Motor neuron (in vitro differentiated cells): ENCODE measurements at regions of chr1 and their contacts with region 1.

Region 1: DNA sequence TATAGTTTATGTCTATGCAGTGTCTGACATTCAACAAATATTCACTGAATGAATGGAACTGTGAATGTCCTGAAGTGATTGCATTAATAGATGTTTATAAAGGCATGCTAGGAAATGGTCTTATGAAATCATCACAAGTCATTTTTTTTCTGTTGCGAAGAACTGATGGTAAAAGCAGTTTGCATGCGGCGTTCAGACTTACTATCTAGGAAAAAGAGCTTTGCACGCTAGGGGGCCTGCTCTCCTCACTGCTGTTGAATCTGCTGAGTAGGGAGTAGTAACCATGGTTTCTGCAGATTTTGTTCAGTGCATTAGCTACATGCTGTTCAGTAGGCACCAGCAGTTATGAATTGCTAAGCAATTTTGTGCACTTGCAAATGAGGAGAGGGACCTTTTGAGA is 57.9 kb downstream of the CENPF start:
- ATAC-seq: peak; percentile 96 to 99 (median 98)
- H3K4me3 ChIP-seq: no peak overlapping the region
- H3K27ac ChIP-seq: no peak overlapping the region
- H3K4me1 ChIP-seq: peaks cover 22 to 26% of the 10 kb centered on the region in 2 donors

Region 2: DNA sequence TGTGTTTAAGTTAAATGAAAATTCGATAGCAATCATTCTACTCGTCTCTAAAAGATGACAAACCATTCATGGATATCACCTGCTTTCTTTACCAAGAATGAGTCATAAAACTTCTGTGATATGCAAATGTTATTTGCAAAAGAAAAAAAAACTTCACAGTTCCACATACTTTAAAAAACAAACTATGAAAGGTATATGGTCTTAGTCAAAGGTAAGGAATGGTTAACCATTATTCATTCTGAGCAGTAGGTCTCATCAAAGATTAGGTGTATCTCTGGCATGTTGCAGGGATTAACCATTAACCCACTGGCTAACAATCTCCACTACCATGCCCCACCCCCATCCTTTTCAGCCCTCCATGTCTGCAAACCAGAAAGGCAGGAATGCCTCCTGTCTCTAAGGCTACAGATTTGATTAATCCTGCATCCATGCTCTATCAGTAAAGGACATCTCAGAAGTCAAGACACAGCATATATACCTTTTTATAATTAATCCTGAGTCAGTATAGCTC is 153.8 kb before region 1 on chr1:
- in situ Hi-C with region 1: no loop called
- ATAC-seq: no peak
- H3K4me3 ChIP-seq: no peak overlapping the region
- H3K27ac ChIP-seq: no peak overlapping the region
- H3K4me1 ChIP-seq: peaks cover 0 to 8% of the 10 kb centered on the region in 2 donors

Region 3: GRCh38 chr1:214808845-214809460 is 148.1 kb after region 1 on chr1:
- in situ Hi-C with region 1: loop called in 1 of 9 experiments (anchors 25 kb)
- ATAC-seq: peak in 3 of 8 experiments; percentile 55 to 74 (median 57)
- H3K4me3 ChIP-seq: no peak overlapping the region
- H3K27ac ChIP-seq: no peak overlapping the region
- H3K4me1 ChIP-seq: no peaks in the 10 kb centered on the region

Region 4: GRCh38 chr1:215146341-215146826 is 485.5 kb after region 1 on chr1:
- in situ Hi-C with region 1: loop called in 4 of 9 experiments (anchors 10 to 25 kb)
- ATAC-seq: no peak
- H3K4me3 ChIP-seq: no peak overlapping the region
- H3K27ac ChIP-seq: no peak overlapping the region
- H3K4me1 ChIP-seq: no peaks in the 10 kb centered on the region

Region 5: GRCh38 chr1:215517441-215517891 is 856.6 kb after region 1 on chr1:
- in situ Hi-C with region 1: loop called in 6 of 9 experiments (anchors 10 to 25 kb)
- ATAC-seq: peak in 7 of 8 experiments; percentile 52 to 96 (median 77)
- H3K4me3 ChIP-seq: no peak overlapping the region
- H3K27ac ChIP-seq: no peak overlapping the region
- H3K4me1 ChIP-seq: peaks cover 0 to 3% of the 10 kb centered on the region in 2 donors

Region 6: GRCh38 chr1:215526553-215527151 is 865.8 kb after region 1 on chr1:
- in situ Hi-C with region 1: loop called in 7 of 9 experiments (anchors 10 to 25 kb)
- ATAC-seq: peak in 4 of 8 experiments; percentile 34 to 57 (median 51)
- H3K4me3 ChIP-seq: no peak overlapping the region
- H3K27ac ChIP-seq: no peak overlapping the region
- H3K4me1 ChIP-seq: peaks cover 14 to 27% of the 10 kb centered on the region in 2 donors